ENCODE measurements at regions of chr21 and their contacts with region 1.

Region 1: DNA sequence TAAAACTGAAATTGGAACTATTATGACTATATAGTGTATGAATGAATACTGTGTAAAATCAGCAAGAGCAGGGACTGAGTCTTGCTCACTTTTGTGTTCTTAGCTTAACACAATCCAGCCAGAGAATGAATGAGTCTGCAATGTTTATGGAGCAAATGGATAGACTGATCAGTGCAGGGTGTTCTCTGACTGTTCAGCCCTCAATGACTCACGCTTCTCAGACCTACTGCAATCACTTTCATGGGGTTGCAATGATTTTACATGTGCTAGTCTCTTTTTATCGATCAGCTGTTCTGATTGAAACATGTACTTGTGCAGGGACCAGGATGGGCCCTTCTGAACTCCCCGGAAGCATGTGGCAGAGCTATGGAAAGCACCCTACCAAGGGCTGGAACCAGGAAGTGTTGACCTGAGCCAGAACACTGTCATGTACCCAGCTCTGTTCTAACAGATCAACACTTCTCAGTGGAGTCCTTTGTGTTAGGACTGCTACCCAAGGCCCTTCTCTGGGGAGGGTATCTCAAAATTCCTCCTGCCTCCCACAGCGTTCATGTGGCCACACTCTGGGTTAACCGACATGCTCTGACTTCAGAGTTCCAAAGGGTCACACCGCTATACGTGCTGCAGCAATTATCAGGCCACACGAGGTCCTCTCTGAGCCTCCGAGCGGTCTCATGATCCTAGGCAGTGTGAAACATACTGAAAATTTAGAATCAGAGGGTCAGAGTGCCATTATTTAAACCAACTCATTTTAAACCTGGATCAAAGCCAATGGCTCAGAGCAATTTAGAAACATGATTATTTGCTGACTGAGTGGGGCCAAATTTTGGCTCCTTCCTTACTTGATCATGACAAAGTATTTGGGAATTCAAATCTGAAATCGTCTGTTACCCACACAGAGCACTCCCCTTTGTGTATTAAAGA is 35.2 kb downstream of the GRIK1 start:
- DNase-seq: no peak
- H3K4me3 Mint-ChIP-seq: no peak overlapping the region
- H3K27ac Mint-ChIP-seq: no peak overlapping the region
- H3K4me1 Mint-ChIP-seq: no peaks in the 10 kb centered on the region
- H3K27me3 Mint-ChIP-seq: no peaks in the 10 kb centered on the region

Region 2: DNA sequence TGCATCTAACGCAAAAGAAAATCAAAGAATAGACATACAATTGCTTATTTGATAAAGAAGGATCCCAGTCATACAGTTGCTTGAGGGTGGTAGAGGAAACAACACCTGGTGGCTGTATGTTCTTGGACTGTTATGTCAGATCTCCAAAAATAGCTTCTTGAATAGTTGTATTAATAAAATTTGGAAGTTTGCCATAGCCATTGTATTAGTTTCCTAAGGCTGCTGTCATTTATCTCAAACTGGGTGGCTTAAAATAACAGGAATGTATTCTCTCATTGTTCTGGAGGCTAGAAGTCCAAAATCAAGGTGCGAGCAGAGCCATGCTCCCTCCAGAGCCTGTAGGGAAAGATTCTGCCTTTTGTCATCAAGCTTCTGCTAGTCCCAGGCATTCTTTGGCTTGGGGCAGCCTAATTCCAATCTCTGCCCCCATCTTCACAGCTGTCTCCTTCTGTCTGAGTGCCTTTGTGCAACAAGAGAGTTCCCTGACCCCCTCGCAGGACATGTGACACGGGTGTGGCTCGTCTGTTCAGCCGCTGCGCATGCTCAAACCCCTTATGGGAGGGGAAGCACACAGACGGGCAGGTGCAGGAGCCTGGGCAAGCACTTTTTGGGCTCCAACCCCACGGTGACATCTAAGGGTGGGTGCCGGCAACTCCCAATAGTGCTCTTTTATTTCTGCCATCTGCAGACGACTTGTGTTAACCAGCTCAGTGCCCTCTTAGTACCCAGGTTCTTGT is 56.8 kb after region 1 on chr21:
- intact Hi-C with region 1: loop called (anchors 10 kb)
- DNase-seq: no peak
- H3K4me3 Mint-ChIP-seq: no peak overlapping the region
- H3K27ac Mint-ChIP-seq: no peak overlapping the region
- H3K4me1 Mint-ChIP-seq: no peaks in the 10 kb centered on the region
- H3K27me3 Mint-ChIP-seq: no peaks in the 10 kb centered on the region

Region 3: GRCh38 chr21:30129246-30129645 is 224.6 kb after region 1 on chr21:
- intact Hi-C with region 1: no loop called
- DNase-seq: no peak
- H3K4me3 Mint-ChIP-seq: no peak overlapping the region
- H3K27ac Mint-ChIP-seq: no peak overlapping the region
- H3K4me1 Mint-ChIP-seq: no peaks in the 10 kb centered on the region
- H3K27me3 Mint-ChIP-seq: no peaks in the 10 kb centered on the region